Activated naive CD4-positive, alpha-beta T cell treated with anti-CD3 and anti-CD28 coated beads for 36 hours (primary cell): ENCODE measurements at regions of chr2 and their contacts with region 1.

Region 1: GRCh38 chr2:231104115-231104713 is 20.6 kb downstream of the HTR2B start:
- DNase-seq: peak; percentile 77
- H3K4me3 Mint-ChIP-seq: no peak overlapping the region
- H3K27ac Mint-ChIP-seq: no peak overlapping the region
- H3K4me1 Mint-ChIP-seq: peaks cover 12% of the 10 kb centered on the region
- H3K27me3 Mint-ChIP-seq: no peaks in the 10 kb centered on the region

Region 2: DNA sequence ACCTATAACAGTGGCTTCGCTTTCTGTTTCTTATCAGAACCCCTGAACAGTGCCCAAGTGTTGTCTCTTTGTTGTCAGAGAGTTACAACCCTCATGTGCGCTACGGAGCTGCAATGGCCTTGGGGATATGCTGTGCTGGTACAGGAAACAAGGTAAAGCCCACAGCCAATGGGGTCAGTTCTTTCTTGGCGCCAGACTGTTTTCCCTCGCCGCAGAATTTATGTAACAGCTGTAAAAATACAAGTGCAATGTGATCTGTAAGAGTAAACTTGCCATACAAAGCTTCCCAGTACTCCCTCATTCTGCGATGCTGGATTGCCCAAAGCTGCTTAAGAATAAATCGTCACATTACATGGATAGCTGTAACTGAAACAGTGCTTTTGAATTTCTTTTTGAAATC is 34.5 kb after region 1 on chr2:
- CTCF ChIA-PET with region 1: no interaction called
- intact Hi-C with region 1: no loop called
- DNase-seq: no peak
- H3K4me3 Mint-ChIP-seq: no peak overlapping the region
- H3K27ac Mint-ChIP-seq: no peak overlapping the region
- H3K4me1 Mint-ChIP-seq: no peaks in the 10 kb centered on the region
- H3K27me3 Mint-ChIP-seq: no peaks in the 10 kb centered on the region

Region 3: GRCh38 chr2:231290321-231291015 is 186.3 kb after region 1 on chr2:
- CTCF ChIA-PET with region 1: no interaction called
- intact Hi-C with region 1: no loop called
- DNase-seq: no peak
- H3K4me3 Mint-ChIP-seq: no peak overlapping the region
- H3K27ac Mint-ChIP-seq: no peak overlapping the region
- H3K4me1 Mint-ChIP-seq: no peaks in the 10 kb centered on the region
- H3K27me3 Mint-ChIP-seq: no peaks in the 10 kb centered on the region

Region 4: GRCh38 chr2:231399853-231400680 is 295.9 kb after region 1 on chr2:
- CTCF ChIA-PET with region 1: interaction called, 3 read pairs
- intact Hi-C with region 1: loop called (anchors 1 kb)
- DNase-seq: no peak
- H3K4me3 Mint-ChIP-seq: no peak overlapping the region
- H3K27ac Mint-ChIP-seq: no peak overlapping the region
- H3K4me1 Mint-ChIP-seq: peaks cover 4% of the 10 kb centered on the region
- H3K27me3 Mint-ChIP-seq: peaks cover 12% of the 10 kb centered on the region

Region 5: GRCh38 chr2:231411831-231412617 is 307.8 kb after region 1 on chr2:
- CTCF ChIA-PET with region 1: interaction called, 4 read pairs
- intact Hi-C with region 1: loop called (anchors 2 kb)
- DNase-seq: peak; percentile 81
- H3K4me3 Mint-ChIP-seq: peak overlapping the region; percentile 45
- H3K27ac Mint-ChIP-seq: no peak overlapping the region
- H3K4me1 Mint-ChIP-seq: peaks cover 7% of the 10 kb centered on the region
- H3K27me3 Mint-ChIP-seq: peaks cover 33% of the 10 kb centered on the region